Endothelial cell of umbilical vein (primary cell): ENCODE measurements at regions of chr10 and their contacts with region 1.

Region 1: DNA sequence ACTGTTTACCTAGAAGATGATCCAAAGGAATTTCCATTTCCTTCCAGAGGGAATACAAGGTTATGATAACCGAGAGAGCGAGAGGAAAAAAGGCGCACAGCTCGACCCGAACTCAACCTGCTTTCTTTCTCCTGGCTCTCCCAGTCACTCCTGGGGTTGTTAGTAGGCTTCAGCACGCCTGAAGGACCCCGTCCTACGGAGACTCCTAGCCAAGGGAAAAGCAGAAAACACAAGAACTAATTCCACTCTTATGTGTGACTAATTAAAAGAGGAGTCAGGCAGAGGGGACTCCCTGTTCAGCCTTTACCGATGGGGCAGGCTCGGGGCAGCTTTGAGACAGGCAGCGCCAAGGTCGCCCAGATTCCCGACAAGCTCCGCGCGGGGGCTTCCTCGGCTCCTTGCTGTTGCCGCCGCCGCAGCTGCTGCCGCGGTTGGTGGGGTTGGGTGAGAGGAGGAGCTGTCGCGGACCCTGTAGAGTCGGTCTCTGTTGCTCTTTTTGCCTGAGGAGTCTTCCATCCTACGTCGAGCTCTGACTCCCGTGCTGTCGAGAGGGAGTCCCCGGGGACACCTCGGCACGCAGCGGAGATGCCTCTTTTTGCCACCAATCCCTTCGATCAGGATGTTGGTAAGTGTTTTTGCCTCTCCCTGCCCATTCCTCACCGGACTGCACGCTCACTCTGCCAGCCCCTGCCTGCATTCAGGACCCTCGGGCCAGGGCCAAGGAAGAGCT is at the start of gene STAM:
- DNase-seq: peak; percentile 96
- H3K4me3 ChIP-seq: peak within 1 kb of the TSS; percentile 36 to 90 (median 84)
- H3K27ac ChIP-seq: peak within 1 kb of the TSS; percentile 95
- H3K4me1 ChIP-seq: peaks cover 21% of the 10 kb centered on the region
- H3K27me3 ChIP-seq: no peaks in the 10 kb centered on the region
- CTCF ChIP-seq: no peak
- POLR2A ChIP-seq: peak; percentile 76
- total RNA-seq, gene STAM: 20.0 and 20.6 TPM in 2 replicates

Region 2: GRCh38 chr10:16867556-16867955 is 776.4 kb before region 1 on chr10:
- CTCF ChIA-PET with region 1: no interaction called
- POLR2A ChIA-PET with region 1: no interaction called
- dilution Hi-C with region 1: no loop called
- intact Hi-C with region 1: no loop called
- DNase-seq: peak; percentile 33
- H3K4me3 ChIP-seq: no peak overlapping the region
- H3K27ac ChIP-seq: no peak overlapping the region
- H3K4me1 ChIP-seq: no peaks in the 10 kb centered on the region
- H3K27me3 ChIP-seq: no peaks in the 10 kb centered on the region
- CTCF ChIP-seq: no peak
- POLR2A ChIP-seq: no peak

Region 3: GRCh38 chr10:17562614-17563013 is 81.3 kb before region 1 on chr10:
- CTCF ChIA-PET with region 1: no interaction called
- POLR2A ChIA-PET with region 1: no interaction called
- dilution Hi-C with region 1: no loop called
- intact Hi-C with region 1: no loop called
- DNase-seq: peak; percentile 26
- H3K4me3 ChIP-seq: no peak overlapping the region
- H3K27ac ChIP-seq: no peak overlapping the region
- H3K4me1 ChIP-seq: no peaks in the 10 kb centered on the region
- H3K27me3 ChIP-seq: no peaks in the 10 kb centered on the region
- CTCF ChIP-seq: no peak
- POLR2A ChIP-seq: no peak

Region 4: DNA sequence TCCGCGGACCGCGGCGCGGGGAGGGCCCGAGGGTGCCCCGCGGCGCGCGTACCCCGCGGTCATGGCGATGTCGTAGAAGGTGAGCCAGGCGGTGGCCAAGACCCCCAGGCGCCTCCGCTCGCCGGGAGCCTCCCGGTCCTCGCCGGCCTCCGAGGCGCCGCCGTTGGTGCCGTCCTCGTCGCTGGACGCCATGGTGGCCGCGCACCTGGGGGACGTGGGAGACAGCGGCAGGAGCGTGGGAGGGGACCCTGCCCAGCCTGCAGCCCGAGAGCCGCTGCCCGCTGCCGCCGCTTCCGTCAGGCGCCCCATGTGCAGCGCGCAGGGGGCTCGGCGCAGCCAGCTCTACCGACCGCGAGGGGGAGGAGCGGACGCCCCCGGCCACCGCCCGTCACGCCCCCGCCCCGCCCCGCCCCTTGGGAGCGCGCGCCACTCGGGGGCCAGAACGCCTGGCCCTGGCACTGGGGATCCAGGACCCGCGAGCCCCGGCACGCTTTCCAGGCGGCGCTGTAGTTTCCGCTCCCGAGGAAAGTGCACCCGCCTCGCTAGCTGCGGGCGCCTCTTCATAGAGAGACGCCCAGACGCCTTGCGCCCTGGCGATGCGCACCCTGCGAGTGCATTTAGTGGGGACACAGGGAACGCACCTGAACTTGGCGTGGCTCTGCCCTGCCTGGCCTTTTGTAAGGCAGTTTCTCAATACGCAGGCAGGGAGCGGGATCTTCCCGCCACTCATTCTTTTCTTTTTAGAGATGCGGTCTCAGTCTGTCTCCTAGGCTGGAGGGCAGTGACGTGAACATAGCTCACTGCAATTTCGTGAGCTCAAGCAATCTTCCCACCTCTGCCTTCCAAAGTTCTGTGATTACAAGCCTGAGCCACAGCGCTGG is 26.6 kb before region 1 on chr10 and contains the start of gene HACD1:
- CTCF ChIA-PET with region 1: interaction called, 17 read pairs
- POLR2A ChIA-PET with region 1: interaction called, 16 read pairs
- dilution Hi-C with region 1: no loop called
- intact Hi-C with region 1: loop called (anchors 1 kb)
- DNase-seq: peak; percentile 65
- H3K4me3 ChIP-seq: peak within 1 kb of the TSS; percentile 75 to 86 (median 81)
- H3K27ac ChIP-seq: peak within 1 kb of the TSS; percentile 37
- H3K4me1 ChIP-seq: peaks cover 3% of the 10 kb centered on the region
- H3K27me3 ChIP-seq: peaks cover 3 to 4% of the 10 kb centered on the region in 2 experiments
- CTCF ChIP-seq: peak; percentile 5 to 26
- POLR2A ChIP-seq: peak; percentile 31
- total RNA-seq, gene HACD1: 25.2 and 26.6 TPM in 2 replicates

Region 5: DNA sequence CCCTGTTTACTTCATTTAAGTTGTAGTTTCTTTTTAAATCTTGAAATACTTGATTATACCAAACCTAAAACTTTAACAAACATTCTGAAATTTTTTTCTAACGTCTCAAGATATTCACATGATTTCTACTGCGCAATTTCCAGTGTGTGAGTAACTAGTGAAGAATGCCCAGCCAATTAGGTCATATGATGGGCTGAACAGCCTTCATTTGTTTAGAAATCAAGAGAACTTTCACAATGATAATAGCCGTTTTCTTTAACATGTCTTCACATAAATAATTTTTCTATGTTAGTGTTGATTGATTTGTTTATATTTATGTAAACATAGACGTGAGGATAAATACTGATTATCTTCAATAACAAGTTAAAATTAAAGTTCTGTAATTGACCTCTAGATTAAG is 21.8 kb after region 1 on chr10:
- CTCF ChIA-PET with region 1: interaction called, 5 read pairs
- POLR2A ChIA-PET with region 1: no interaction called
- dilution Hi-C with region 1: no loop called
- intact Hi-C with region 1: loop called (anchors 1 kb)
- DNase-seq: peak; percentile 76
- H3K4me3 ChIP-seq: no peak overlapping the region
- H3K27ac ChIP-seq: peak overlapping the region; percentile 67
- H3K4me1 ChIP-seq: peaks cover 12% of the 10 kb centered on the region
- H3K27me3 ChIP-seq: no peaks in the 10 kb centered on the region
- CTCF ChIP-seq: no peak
- POLR2A ChIP-seq: no peak

Region 6: DNA sequence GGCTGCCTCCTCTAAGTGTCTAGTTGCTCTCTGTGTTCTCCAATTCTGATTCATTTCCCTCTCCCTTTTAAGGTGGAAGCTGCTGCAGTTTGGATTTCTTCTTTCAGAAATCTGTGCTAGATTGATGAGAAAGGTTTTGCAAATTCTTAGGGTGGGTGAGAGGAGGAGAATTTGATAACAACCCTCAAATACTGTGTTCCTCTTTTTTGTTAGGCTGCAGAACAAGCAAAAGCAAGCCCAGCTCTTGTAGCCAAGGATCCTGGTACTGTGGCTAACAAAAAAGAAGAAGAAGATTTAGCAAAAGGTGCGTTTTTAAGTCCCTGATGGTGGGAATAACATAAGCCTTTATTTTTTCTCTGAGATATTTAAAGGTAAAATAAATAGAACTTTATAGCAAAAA is 49.1 kb after region 1 on chr10:
- CTCF ChIA-PET with region 1: no interaction called
- POLR2A ChIA-PET with region 1: no interaction called
- dilution Hi-C with region 1: no loop called
- intact Hi-C with region 1: no loop called
- DNase-seq: peak; percentile 13
- H3K4me3 ChIP-seq: no peak overlapping the region
- H3K27ac ChIP-seq: no peak overlapping the region
- H3K4me1 ChIP-seq: no peaks in the 10 kb centered on the region
- H3K27me3 ChIP-seq: no peaks in the 10 kb centered on the region
- CTCF ChIP-seq: no peak
- POLR2A ChIP-seq: no peak

Region 7: GRCh38 chr10:17737027-17737965 is 93.4 kb after region 1 on chr10:
- CTCF ChIA-PET with region 1: interaction called, 6 read pairs
- POLR2A ChIA-PET with region 1: no interaction called
- dilution Hi-C with region 1: no loop called
- intact Hi-C with region 1: loop called (anchors 1 kb)
- DNase-seq: peak; percentile 43
- H3K4me3 ChIP-seq: no peak overlapping the region
- H3K27ac ChIP-seq: no peak overlapping the region
- H3K4me1 ChIP-seq: peaks cover 9% of the 10 kb centered on the region
- H3K27me3 ChIP-seq: no peaks in the 10 kb centered on the region
- CTCF ChIP-seq: peak; percentile 29 to 45
- POLR2A ChIP-seq: no peak

Region 8: GRCh38 chr10:17836942-17837341 is 193.0 kb after region 1 on chr10:
- CTCF ChIA-PET with region 1: no interaction called
- POLR2A ChIA-PET with region 1: no interaction called
- dilution Hi-C with region 1: no loop called
- intact Hi-C with region 1: loop called (anchors 5 kb)
- DNase-seq: peak; percentile 87
- H3K4me3 ChIP-seq: peak overlapping the region in 1 of 3 experiments; percentile 28
- H3K27ac ChIP-seq: peak overlapping the region; percentile 62
- H3K4me1 ChIP-seq: peaks cover 20% of the 10 kb centered on the region
- H3K27me3 ChIP-seq: no peaks in the 10 kb centered on the region
- CTCF ChIP-seq: no peak
- POLR2A ChIP-seq: no peak